Heart left ventricle (tissue), 16 donors: ENCODE measurements at regions of chr9 and their contacts with region 1.

Region 1: DNA sequence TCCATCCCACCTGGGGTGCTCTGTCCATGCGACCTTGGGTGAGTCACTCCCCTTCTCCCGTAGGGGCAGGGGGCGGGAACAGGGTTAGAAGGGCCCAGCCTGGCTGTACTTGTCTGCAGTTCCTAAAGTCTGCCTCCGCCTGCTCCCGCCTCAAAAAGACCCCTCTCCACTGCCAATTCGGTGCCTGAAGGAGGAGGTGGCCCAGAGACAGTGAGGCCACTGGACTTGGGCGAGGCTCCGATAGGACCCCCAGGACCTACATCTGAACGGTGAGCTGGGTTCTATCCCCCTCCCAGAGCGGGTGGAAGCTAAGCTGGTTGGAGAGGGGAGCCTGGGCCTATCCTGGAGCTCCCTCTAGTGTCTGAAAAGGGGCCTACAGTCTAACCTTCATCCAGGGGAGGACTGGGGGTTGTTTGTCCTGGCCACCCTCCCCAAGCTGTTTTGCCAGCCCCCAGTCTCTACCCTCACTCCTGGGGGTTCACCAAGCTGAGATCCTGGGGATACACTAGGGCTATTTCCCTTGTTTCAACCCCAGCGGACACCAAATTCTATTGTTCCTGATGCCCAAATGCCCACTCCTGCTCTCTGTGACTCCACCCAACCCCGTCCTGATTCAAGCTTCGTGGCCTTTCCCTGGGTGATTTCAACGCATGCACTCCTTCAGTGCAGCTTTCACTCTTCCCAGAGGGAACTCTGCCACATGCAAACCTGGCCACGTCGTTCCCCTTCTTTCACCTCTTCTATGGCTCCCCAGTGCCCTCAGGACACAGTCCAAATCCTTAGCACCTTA is 6.1 kb upstream of the CRB2 start:
- DNase-seq: peak in 2 of 5 donors; percentile 47
- ATAC-seq: peak; percentile 59 to 84 (median 76)
- H3K4me3 ChIP-seq: no peak overlapping the region
- H3K27ac ChIP-seq: no peak overlapping the region
- H3K4me1 ChIP-seq: peaks cover 0 to 14% (median 3%) of the 10 kb centered on the region in 12 donors
- H3K27me3 ChIP-seq: peaks cover 0 to 28% (median 4%) of the 10 kb centered on the region in 9 donors
- CTCF ChIP-seq: peak; percentile 82 to 98 (median 94)
- POLR2A ChIP-seq: no peak

Region 2: DNA sequence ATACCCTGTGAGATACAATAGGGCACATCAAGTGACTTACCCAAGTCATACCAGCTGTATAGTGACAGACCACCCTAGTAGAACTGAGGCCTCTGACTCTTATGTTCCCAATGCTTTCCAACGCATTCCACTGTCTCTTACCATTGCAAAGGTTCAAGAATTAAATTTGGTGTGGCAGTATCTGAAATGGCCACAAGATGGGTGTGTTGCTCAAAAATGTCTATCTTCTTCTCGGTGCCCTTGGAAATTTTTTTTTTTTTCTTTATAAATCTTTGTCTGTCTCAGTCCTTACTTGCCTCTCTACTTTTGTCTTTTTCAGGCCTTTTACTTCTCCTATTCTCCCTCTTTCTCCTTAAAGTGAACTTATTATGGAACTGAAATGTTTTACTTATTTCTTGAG is 268.1 kb before region 1 on chr9:
- intact Hi-C with region 1: loop called (anchors 1 to 5 kb)
- DNase-seq: no peak
- ATAC-seq: peak in 1 of 4 donors; percentile 18
- H3K4me3 ChIP-seq: no peak overlapping the region
- H3K27ac ChIP-seq: no peak overlapping the region
- H3K4me1 ChIP-seq: no peaks in the 10 kb centered on the region
- H3K27me3 ChIP-seq: no peaks in the 10 kb centered on the region
- CTCF ChIP-seq: peak; percentile 26 to 63 (median 46)
- POLR2A ChIP-seq: no peak

Region 3: GRCh38 chr9:123112015-123112975 is 237.6 kb before region 1 on chr9:
- intact Hi-C with region 1: loop called in 1 of 10 experiments (anchors 10 kb)
- DNase-seq: peak in 2 of 5 donors; percentile 45 to 68
- ATAC-seq: peak; percentile 21 to 67 (median 47)
- H3K4me3 ChIP-seq: no peak overlapping the region
- H3K27ac ChIP-seq: peak overlapping the region in 6 of 12 donors; percentile 17 to 58 (median 40)
- H3K4me1 ChIP-seq: peaks cover 0 to 27% (median 12%) of the 10 kb centered on the region in 12 donors
- H3K27me3 ChIP-seq: no peaks in the 10 kb centered on the region
- CTCF ChIP-seq: no peak
- POLR2A ChIP-seq: no peak

Region 4: DNA sequence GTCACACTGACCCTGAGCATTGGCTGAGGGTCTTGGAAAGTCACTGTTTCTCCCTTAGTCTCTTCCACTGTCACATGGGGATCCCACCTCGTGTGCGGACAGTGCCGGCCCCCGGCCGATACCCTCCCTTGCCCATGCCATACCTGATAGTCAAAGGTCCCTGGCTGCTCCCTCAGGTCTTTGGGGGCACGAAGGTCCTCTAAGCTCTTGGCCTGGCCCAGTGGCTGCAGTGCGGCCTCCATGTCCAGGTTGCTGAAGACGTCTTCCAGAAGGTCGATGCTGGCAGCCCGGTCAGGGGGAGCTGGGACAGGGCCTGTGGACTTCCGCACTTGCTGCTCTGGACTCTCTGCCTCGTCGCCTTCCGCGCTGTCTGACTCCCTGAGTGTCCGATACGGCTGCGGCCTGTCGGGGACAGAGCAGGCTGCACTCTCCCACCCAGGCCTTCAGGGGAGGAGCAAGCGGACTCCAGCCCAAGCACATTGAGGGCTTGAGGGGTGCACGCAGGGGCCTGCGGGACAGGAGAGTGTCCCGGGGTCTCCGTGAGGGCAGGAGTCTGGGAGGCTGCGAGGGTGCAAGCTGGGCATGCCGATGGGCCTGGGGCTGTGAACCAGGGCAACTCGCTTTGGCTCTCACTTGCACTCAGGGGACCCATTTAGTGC is 33.8 kb after region 1 on chr9:
- intact Hi-C with region 1: loop called in 3 of 10 experiments (anchors 1 to 5 kb)
- DNase-seq: no peak
- ATAC-seq: no peak
- H3K4me3 ChIP-seq: no peak overlapping the region
- H3K27ac ChIP-seq: no peak overlapping the region
- H3K4me1 ChIP-seq: no peaks in the 10 kb centered on the region
- H3K27me3 ChIP-seq: no peaks in the 10 kb centered on the region
- CTCF ChIP-seq: no peak
- POLR2A ChIP-seq: no peak